A549 (cell line): ENCODE measurements at regions of chr11 and their contacts with region 1.

Region 1: DNA sequence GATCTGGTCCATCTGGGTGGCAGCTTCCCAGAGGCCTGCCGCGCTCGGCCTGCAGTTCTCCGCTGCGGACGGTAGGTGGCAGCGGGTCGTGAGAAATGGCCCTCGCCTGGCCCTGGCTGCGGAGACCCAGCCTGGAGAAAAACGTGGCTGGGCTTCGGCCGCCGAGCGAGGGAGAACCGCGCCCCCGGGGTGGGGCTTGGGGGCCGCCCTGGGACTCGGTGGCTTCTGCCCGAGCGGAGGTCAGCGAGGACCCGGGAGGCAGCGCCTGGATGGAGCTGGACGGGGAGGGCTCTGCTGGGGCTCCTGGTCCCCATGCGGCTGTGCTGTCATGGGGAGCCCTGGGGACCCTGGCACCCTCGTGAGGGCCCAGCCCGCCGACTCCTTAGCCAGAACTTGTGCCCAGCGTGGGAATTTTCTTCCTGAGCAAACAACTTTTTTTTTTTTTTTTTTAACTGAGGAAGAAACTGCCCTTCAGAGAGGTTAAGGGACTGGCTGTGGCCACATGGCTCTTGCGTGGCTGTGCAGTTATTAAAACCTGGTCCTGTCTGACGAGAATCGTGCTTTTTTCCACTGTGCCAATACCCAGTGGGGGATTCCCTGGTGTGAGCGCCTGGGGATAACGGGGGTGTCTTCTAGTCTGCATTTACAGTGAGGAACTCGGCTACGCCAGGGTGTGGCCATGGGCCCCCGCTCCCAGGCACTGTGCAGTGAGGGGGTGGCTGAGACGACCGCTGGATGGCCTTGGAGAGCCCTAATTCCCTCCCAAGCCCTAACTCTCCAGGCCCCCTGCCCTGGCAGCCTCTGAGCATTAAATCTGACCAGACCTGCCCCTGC is 535.6 kb downstream of the INSC start:
- DNase-seq: peak; percentile 79 to 90
- ATAC-seq: peak; percentile 97 to 98
- H3K4me3 ChIP-seq: peak overlapping the region; percentile 43
- H3K27ac ChIP-seq: peak overlapping the region; percentile 84
- H3K4me1 ChIP-seq: peaks cover 6% of the 10 kb centered on the region
- CTCF ChIP-seq: peak; percentile 82
- EP300 ChIP-seq: no peak
- POLR2A ChIP-seq: peak; percentile 59
- RAD21 ChIP-seq: peak; percentile 83 to 95

Region 2: DNA sequence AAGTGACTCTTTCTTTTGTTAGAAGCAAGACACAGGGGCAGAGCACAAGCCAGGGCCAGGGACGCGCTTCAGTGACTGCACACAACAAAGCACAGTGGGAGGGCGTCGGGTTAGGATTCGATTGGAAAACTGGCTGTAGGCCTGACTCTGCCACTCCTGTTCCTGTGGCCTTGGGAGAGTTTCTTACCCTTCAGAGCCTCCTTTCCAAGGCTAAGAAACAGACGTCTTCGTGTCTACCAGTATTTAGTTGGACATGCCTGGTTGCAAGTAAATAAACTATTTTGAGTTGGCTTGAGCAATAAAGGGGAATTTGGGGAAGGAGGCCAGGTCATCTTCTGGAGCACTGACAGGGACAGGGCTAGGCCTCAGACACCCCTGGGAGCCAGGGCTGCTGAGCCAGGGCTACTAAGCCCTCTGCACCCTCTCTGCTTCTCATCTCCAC is 13.5 kb after region 1 on chr11:
- CTCF ChIA-PET with region 1: interaction called, 12 read pairs
- POLR2A ChIA-PET with region 1: no interaction called
- DNase-seq: peak in 1 of 2 experiments; percentile 19
- ATAC-seq: no peak
- H3K4me3 ChIP-seq: no peak overlapping the region
- H3K27ac ChIP-seq: peak overlapping the region in 1 of 2 experiments; percentile 41; a peak in 1 of 6 replicates
- H3K4me1 ChIP-seq: peaks cover 41% of the 10 kb centered on the region
- CTCF ChIP-seq: no peak
- EP300 ChIP-seq: no peak
- POLR2A ChIP-seq: no peak
- RAD21 ChIP-seq: no peak

Region 3: GRCh38 chr11:15727125-15727914 is 77.0 kb after region 1 on chr11:
- CTCF ChIA-PET with region 1: no interaction called
- POLR2A ChIA-PET with region 1: no interaction called
- DNase-seq: no peak
- ATAC-seq: no peak
- H3K4me3 ChIP-seq: no peak overlapping the region
- H3K27ac ChIP-seq: no peak overlapping the region
- H3K4me1 ChIP-seq: no peaks in the 10 kb centered on the region
- CTCF ChIP-seq: no peak
- EP300 ChIP-seq: no peak
- POLR2A ChIP-seq: no peak
- RAD21 ChIP-seq: no peak

Region 4: GRCh38 chr11:15819679-15820286 is 169.5 kb after region 1 on chr11:
- CTCF ChIA-PET with region 1: interaction called, 10 read pairs
- POLR2A ChIA-PET with region 1: no interaction called
- DNase-seq: peak; percentile 41 to 60
- ATAC-seq: peak; percentile 89 to 97
- H3K4me3 ChIP-seq: no peak overlapping the region
- H3K27ac ChIP-seq: no peak overlapping the region
- H3K4me1 ChIP-seq: no peaks in the 10 kb centered on the region
- CTCF ChIP-seq: peak; percentile 69
- EP300 ChIP-seq: no peak
- POLR2A ChIP-seq: no peak
- RAD21 ChIP-seq: peak; percentile 69 to 71